CD14-positive monocyte (primary cell): ENCODE measurements at regions of chr3 and their contacts with region 1.

Region 1: DNA sequence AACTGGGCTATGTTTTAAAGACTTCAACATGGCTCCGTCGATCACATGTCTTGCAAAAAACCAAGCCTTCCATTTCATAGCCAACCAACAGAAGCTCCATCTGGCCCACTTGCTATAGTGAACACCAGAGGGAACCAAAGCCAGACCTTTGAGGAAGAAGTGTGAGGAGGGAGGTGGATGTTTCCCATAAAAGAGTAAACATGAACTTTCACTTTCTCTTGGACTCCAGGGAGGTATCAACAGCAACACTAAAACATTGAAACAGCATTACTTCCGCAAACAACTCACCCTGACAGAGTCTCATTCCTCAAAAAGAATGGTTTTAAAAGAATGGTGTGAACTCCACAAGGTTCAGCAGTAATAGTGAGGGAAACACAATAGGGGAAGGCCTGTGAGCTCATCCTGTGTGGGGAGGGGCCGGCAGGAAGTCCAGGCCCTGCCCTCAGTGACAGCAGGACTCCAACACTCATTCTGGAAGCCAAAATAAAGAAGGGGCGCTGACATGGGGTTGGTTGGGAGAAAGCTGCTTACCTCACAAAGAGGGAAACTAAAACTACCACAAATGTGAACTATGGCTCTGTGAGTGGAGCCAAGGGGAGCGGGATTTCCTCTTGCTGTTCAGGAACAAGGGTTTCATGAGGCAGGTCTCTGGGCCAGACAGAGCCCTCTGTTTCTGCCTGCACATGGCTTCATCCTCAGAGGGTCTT is 59.0 kb upstream of the IL12A start:
- DNase-seq: peak; percentile 89 to 94 (median 89)
- H3K4me3 ChIP-seq: peak overlapping the region in 2 of 3 experiments; percentile 1 to 53
- H3K4me3 Mint-ChIP-seq: peak overlapping the region; percentile 58 to 71
- H3K27ac ChIP-seq: peak overlapping the region; percentile 76 to 86
- H3K27ac Mint-ChIP-seq: peak overlapping the region; percentile 86 to 99 (median 92)
- H3K4me1 ChIP-seq: peaks cover 38 to 44% of the 10 kb centered on the region in 2 donors
- H3K4me1 Mint-ChIP-seq: peaks cover 39% of the 10 kb centered on the region
- H3K27me3 ChIP-seq: no peaks in the 10 kb centered on the region
- H3K27me3 Mint-ChIP-seq: peaks cover 0 to 2% (median 0%) of the 10 kb centered on the region in 3 donors
- CTCF ChIP-seq: peak; percentile 72

Region 2: GRCh38 chr3:159813822-159814523 is 115.6 kb before region 1 on chr3:
- intact Hi-C with region 1: no loop called
- DNase-seq: no peak
- H3K4me3 ChIP-seq: no peak overlapping the region
- H3K4me3 Mint-ChIP-seq: no peak overlapping the region
- H3K27ac ChIP-seq: no peak overlapping the region
- H3K27ac Mint-ChIP-seq: no peak overlapping the region
- H3K4me1 ChIP-seq: no peaks in the 10 kb centered on the region
- H3K4me1 Mint-ChIP-seq: no peaks in the 10 kb centered on the region
- H3K27me3 ChIP-seq: no peaks in the 10 kb centered on the region
- H3K27me3 Mint-ChIP-seq: peaks cover 0 to 4% (median 0%) of the 10 kb centered on the region in 3 donors
- CTCF ChIP-seq: no peak

Region 3: GRCh38 chr3:159988617-159989271 is 59.2 kb after region 1 on chr3 and contains the start of gene IL12A:
- intact Hi-C with region 1: loop called in 1 of 2 experiments (anchors 5 kb)
- DNase-seq: peak; percentile 74 to 80 (median 74)
- H3K4me3 ChIP-seq: peak within 1 kb of the TSS; percentile 49 to 85 (median 77)
- H3K4me3 Mint-ChIP-seq: peak within 1 kb of the TSS; percentile 85 to 95
- H3K27ac ChIP-seq: peak within 1 kb of the TSS in 1 of 2 donors; percentile 46
- H3K27ac Mint-ChIP-seq: peak within 1 kb of the TSS in 5 of 7 donors; percentile 3 to 84 (median 40)
- H3K4me1 ChIP-seq: peaks cover 3 to 10% of the 10 kb centered on the region in 2 donors
- H3K4me1 Mint-ChIP-seq: peaks cover 25% of the 10 kb centered on the region
- H3K27me3 ChIP-seq: no peaks in the 10 kb centered on the region
- H3K27me3 Mint-ChIP-seq: peaks cover 6 to 13% (median 9%) of the 10 kb centered on the region in 3 donors
- CTCF ChIP-seq: peak; percentile 97
- polyA plus RNA-seq, gene IL12A: 0.24 to 0.67 TPM in 2 of 3 donors, not detected in the other

Region 4: DNA sequence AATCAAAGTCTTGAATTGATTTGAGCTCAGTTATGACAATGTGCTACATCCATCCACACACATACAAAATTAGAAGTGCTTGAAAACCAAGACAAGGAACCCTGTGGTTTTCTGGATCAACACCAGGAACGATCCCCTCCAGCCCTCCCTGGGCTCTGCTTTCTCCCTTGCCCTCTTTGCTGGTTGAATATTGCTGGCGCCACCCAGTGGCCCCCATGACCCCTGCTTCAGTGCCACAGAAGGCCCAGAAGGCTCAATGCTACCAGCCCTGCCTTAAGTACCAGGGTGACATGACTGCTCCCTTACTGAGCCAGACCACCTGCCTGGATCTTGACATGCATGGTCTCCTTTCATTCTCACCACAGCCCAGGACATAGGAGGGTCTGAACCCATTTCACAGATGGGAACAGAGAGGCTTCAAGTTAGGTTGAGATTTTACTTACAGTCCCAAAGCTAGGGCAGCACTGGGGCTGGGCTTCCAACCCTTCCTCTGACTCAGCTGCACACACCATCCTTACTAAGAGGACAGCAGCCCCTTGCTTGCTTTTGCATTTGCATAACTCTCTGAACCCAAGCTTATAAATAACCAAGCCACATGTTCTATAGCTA is 74.0 kb after region 1 on chr3:
- intact Hi-C with region 1: loop called in 1 of 2 experiments (anchors 10 kb)
- DNase-seq: peak; percentile 36 to 62 (median 47)
- H3K4me3 ChIP-seq: no peak overlapping the region
- H3K4me3 Mint-ChIP-seq: no peak overlapping the region
- H3K27ac ChIP-seq: no peak overlapping the region
- H3K27ac Mint-ChIP-seq: peak overlapping the region in 1 of 7 donors; percentile 50
- H3K4me1 ChIP-seq: peaks cover 2 to 4% of the 10 kb centered on the region in 2 donors
- H3K4me1 Mint-ChIP-seq: peaks cover 14% of the 10 kb centered on the region
- H3K27me3 ChIP-seq: no peaks in the 10 kb centered on the region
- H3K27me3 Mint-ChIP-seq: peaks cover 0 to 4% (median 0%) of the 10 kb centered on the region in 3 donors
- CTCF ChIP-seq: peak; percentile 68

Region 5: DNA sequence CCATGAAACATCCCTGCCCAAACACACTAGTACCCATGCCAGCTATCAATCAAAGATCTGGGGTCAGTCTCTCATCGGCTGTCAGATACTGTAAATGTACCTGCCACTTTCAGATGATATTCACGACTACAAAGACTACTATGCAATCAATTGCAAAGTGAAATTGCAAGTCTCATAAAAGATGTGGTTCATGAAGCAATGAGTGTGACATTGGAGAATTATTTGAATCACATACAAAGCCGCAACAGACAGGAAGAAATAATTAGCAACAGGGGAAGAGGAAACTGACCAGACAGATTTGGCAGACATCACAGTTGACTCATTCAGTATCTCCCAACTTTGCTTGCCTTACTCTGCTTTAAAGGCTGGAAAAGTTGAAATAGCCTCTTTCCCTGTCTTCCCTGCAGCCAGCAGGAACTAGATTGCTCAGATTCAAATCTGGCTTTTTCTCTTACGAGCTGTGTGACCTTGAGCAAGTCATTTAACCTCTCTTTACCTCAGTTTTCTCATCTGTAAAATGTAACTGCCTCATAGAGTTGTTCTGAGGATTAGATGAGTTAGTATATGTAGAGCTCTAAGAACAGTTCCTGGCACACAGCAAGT is 200.0 kb after region 1 on chr3:
- intact Hi-C with region 1: loop called in 1 of 2 experiments (anchors 10 kb)
- DNase-seq: peak; percentile 85 to 97 (median 91)
- H3K4me3 ChIP-seq: peak overlapping the region in 1 of 3 experiments; percentile 44
- H3K4me3 Mint-ChIP-seq: peak overlapping the region; percentile 13 to 82
- H3K27ac ChIP-seq: peak overlapping the region in 1 of 2 donors; percentile 75
- H3K27ac Mint-ChIP-seq: peak overlapping the region; percentile 75 to 94 (median 88)
- H3K4me1 ChIP-seq: peaks cover 49 to 56% of the 10 kb centered on the region in 2 donors
- H3K4me1 Mint-ChIP-seq: peaks cover 60% of the 10 kb centered on the region
- H3K27me3 ChIP-seq: peaks cover 10 to 13% of the 10 kb centered on the region in 2 donors
- H3K27me3 Mint-ChIP-seq: peaks cover 18 to 28% (median 21%) of the 10 kb centered on the region in 3 donors
- CTCF ChIP-seq: no peak